Activated CD4-positive, alpha-beta T cell treated with anti-CD3 and anti-CD28 coated beads, Interleukin-2, amount 10 ng/mL, durations not matched to agents 24 days and 14 days (primary cell): ENCODE measurements at regions of chr2 and their contacts with region 1.

Region 1: DNA sequence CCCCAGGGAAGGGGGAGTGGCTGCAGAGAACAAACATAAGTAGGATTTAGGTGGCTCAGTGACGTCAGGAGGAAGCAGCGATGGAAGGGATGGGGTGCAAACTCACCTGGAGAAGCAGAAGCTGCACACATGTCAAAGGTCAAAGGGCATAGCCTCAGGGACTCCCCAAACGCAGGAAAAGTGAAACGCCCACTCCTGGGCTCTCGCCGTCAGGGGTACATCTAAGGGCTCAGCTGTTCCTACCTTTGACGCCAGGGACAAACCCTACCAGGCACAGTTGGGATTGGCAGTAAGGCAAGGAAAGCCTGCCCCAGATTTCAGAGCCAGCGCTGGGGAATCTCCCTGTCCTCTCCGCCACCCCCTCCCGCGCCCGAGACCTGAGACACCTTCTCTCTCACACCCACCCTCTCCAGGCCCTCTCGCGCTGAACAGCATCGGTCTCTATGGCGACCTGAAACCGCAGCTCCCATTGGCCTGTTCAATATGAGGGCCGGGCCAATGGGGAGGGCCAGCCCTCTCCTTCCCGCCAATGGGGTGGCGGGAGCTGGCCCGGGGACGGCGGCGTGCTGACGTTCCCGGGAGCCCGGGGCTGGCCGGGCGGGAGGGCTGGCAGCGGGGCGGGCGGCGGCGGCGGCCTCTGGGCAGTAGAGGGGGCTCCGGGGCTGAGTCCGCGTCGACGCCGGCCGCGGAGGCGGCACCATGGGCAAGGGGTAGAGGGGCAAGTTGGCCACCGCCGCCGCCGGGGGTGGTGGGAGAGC is at the starts of genes CCDC148 and PKP4:
- DNase-seq: peak; percentile 97
- H3K4me3 Mint-ChIP-seq: peak within 1 kb of the TSS; percentile 91
- H3K27ac Mint-ChIP-seq: peak within 1 kb of the TSS; percentile 94
- H3K4me1 Mint-ChIP-seq: peaks cover 19% of the 10 kb centered on the region
- H3K27me3 Mint-ChIP-seq: peaks cover 42% of the 10 kb centered on the region
- total RNA-seq, gene CCDC148: not detected in 2 replicates
- total RNA-seq, gene PKP4: 31.5 and 32.6 TPM in 2 replicates

Region 2: DNA sequence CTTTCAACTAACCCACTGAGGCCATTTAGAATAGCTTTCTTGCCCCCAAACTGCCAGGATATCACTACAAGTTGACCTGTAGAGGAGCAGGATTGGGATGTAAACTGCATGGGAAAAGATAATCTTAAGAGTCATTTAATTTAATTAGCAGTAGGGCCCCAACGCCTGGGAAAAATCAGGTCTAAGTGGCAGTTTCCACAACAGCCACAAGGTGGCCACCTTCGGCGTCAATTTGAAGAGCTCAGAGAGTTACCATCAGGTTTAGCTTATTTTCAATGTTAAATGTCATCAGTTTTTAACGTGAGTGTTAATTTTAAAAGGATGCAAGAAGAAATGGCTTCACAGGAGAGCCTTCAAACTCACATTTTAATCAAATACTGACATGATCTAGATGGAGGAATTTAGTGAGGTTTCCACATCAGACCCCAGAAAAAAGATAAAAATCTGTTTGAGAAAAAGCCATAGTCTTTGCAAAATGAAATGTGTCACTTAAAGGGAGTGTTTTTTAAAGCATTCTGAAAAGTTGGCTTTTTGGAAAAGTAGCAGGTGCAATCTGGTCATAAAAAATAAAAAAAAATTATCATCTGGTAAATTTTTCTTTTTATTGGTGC is 432.1 kb before region 1 on chr2:
- intact Hi-C with region 1: loop called (anchors 5 kb)
- DNase-seq: peak; percentile 87
- H3K4me3 Mint-ChIP-seq: no peak overlapping the region
- H3K27ac Mint-ChIP-seq: no peak overlapping the region
- H3K4me1 Mint-ChIP-seq: peaks cover 8% of the 10 kb centered on the region
- H3K27me3 Mint-ChIP-seq: no peaks in the 10 kb centered on the region

Region 3: DNA sequence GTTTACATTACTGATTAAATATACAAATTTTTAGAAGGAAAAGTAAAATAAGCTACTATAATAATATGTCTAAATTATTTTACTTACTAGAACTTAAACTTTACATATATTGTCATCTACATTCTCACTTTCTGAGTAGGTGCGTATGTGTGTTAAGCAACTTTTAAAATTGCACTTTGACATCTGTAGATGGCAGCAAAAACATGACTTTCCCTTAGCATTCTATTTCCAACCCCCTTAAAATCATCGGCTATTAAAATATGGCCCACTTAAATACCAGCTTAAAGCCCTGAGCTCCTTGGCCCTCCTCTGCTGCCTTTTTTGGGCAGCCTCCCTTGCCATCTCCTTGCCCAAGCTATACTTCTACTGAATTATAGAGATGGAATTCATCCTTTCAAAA is 276.8 kb before region 1 on chr2:
- intact Hi-C with region 1: loop called (anchors 5 kb)
- DNase-seq: no peak
- H3K4me3 Mint-ChIP-seq: no peak overlapping the region
- H3K27ac Mint-ChIP-seq: no peak overlapping the region
- H3K4me1 Mint-ChIP-seq: no peaks in the 10 kb centered on the region
- H3K27me3 Mint-ChIP-seq: peaks cover 47% of the 10 kb centered on the region

Region 4: GRCh38 chr2:158191076-158191895 is 265.2 kb before region 1 on chr2:
- intact Hi-C with region 1: loop called (anchors 1 kb)
- DNase-seq: peak; percentile 77
- H3K4me3 Mint-ChIP-seq: peak overlapping the region; percentile 58
- H3K27ac Mint-ChIP-seq: peak overlapping the region; percentile 71
- H3K4me1 Mint-ChIP-seq: peaks cover 16% of the 10 kb centered on the region
- H3K27me3 Mint-ChIP-seq: peaks cover 29% of the 10 kb centered on the region

Region 5: DNA sequence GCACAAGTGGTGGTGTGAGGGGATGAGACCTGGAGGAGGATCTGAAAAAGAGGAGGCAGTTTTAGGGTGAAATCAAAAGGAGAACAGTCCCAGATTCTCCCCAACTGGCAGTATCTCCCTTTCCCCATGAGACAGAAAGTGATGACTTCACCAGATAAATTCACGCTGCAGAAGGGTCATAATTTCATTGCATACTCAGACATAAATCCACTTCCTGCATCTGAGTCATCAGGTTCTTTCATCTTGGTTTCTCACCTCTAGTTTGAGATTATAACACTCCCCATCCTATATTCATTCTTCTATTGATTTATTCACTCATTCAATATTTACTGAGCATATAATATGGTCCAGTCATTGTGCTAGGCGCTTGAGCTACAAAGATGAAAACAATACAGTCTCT is 64.6 kb before region 1 on chr2:
- intact Hi-C with region 1: loop called (anchors 2 kb)
- DNase-seq: no peak
- H3K4me3 Mint-ChIP-seq: no peak overlapping the region
- H3K27ac Mint-ChIP-seq: no peak overlapping the region
- H3K4me1 Mint-ChIP-seq: peaks cover 5% of the 10 kb centered on the region
- H3K27me3 Mint-ChIP-seq: peaks cover 6% of the 10 kb centered on the region

Region 6: GRCh38 chr2:158473719-158474392 is 17.4 kb after region 1 on chr2:
- intact Hi-C with region 1: no loop called
- DNase-seq: no peak
- H3K4me3 Mint-ChIP-seq: no peak overlapping the region
- H3K27ac Mint-ChIP-seq: no peak overlapping the region
- H3K4me1 Mint-ChIP-seq: peaks cover 11% of the 10 kb centered on the region
- H3K27me3 Mint-ChIP-seq: no peaks in the 10 kb centered on the region

Region 7: GRCh38 chr2:158509928-158510797 is 53.7 kb after region 1 on chr2:
- intact Hi-C with region 1: no loop called
- DNase-seq: no peak
- H3K4me3 Mint-ChIP-seq: no peak overlapping the region
- H3K27ac Mint-ChIP-seq: no peak overlapping the region
- H3K4me1 Mint-ChIP-seq: peaks cover 8% of the 10 kb centered on the region
- H3K27me3 Mint-ChIP-seq: no peaks in the 10 kb centered on the region

Region 8: GRCh38 chr2:158753641-158754611 is 297.4 kb after region 1 on chr2:
- intact Hi-C with region 1: loop called (anchors 5 kb)
- DNase-seq: peak; percentile 77
- H3K4me3 Mint-ChIP-seq: no peak overlapping the region
- H3K27ac Mint-ChIP-seq: no peak overlapping the region
- H3K4me1 Mint-ChIP-seq: no peaks in the 10 kb centered on the region
- H3K27me3 Mint-ChIP-seq: peaks cover 8% of the 10 kb centered on the region